Activated naive CD4-positive, alpha-beta T cell treated with anti-CD3 and anti-CD28 coated beads for 36 hours (primary cell): ENCODE measurements at regions of chr5 and their contacts with region 1.

Region 1: DNA sequence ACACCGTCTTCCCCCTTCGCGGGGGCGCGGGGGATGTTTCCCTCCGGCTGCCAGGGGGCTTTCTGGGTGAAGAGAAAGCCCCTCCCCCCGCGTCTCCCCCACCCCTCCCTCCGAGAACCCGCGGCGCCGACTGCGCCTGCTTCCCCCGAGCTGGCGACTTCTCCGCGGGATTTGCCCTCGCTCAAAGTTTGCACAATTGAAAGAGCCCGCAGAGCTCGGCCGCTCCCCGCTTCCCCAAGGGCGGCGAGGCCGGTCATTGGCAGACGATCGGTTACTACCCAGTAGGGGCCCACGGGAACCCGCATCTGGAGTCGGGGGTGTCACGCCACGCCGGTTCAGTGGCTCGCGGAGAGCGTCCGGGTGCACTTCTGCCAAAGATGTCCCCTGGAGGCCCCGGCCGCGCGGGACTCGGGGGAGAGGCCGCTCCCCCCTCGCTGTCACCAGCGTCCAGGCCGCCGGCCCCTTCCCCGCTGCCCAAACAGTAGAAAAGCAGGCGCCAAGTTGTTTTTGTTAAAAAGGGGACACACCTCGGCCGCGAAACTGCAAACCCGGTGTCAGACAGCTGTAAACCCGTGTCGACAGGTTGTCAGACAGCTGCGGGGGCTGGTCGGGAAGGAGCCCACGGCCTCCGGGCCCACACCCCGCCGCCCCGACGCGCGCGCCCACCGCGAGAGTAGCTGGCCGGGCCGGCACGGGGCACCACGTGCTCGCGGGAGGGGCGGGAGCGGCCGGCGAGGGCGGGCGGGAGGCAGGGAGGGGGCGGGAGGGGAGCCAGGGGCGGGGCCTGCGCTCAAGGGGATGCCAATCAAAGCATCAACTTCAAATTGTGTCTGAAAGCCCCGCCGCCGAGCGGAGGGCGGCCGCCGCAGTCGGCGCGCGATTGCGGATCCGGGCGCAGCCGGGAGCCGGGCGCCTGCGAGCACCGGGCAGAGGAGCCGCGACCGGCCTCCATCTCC is at the start of gene IRX1:
- DNase-seq: no peak
- H3K4me3 Mint-ChIP-seq: no peak within 1 kb of the TSS
- H3K27ac Mint-ChIP-seq: no peak within 1 kb of the TSS
- H3K4me1 Mint-ChIP-seq: peaks cover 14% of the 10 kb centered on the region
- H3K27me3 Mint-ChIP-seq: peaks cover 64% of the 10 kb centered on the region
- total RNA-seq, gene IRX1: not detected

Region 2: GRCh38 chr5:2739360-2740050 is 855.8 kb before region 1 on chr5:
- CTCF ChIA-PET with region 1: no interaction called
- intact Hi-C with region 1: loop called (anchors 5 kb)
- DNase-seq: no peak
- H3K4me3 Mint-ChIP-seq: no peak overlapping the region
- H3K27ac Mint-ChIP-seq: no peak overlapping the region
- H3K4me1 Mint-ChIP-seq: no peaks in the 10 kb centered on the region
- H3K27me3 Mint-ChIP-seq: peaks cover 59% of the 10 kb centered on the region